Pancreas (tissue), 10 donors: ENCODE measurements at regions of chr16 and their contacts with region 1.

Region 1: GRCh38 chr16:57413301-57413730 is 8.7 kb downstream of the CCL17 start:
- DNase-seq: peak in 1 of 6 donors; percentile 39
- ATAC-seq: no peak
- H3K4me3 ChIP-seq: no peak overlapping the region
- H3K27ac ChIP-seq: no peak overlapping the region
- H3K4me1 ChIP-seq: peaks cover 0 to 6% (median 0%) of the 10 kb centered on the region in 3 donors
- H3K27me3 ChIP-seq: no peaks in the 10 kb centered on the region
- CTCF ChIP-seq: no peak

Region 2: DNA sequence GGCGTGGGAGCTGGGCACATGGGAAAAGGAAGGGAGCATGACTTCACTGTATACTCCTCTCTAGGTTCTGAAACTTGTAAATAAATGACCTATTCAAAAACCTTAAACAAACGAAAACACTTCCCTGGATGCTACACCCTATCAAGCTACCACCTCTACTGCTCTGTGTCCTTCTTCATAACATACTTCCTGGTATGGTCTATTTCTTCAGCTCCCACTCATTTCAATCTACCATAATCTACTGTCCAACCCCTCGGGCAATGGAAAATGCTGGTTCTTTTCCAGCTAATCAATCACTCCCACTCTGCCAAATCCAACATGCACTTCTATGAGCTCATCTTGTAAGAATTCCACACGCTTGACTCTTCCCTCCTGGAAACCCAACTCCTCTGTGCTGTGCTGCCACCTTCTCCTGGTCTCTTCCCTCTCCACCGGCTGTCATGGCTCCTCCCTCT is 1030.4 kb before region 1 on chr16:
- intact Hi-C with region 1: no loop called
- DNase-seq: no peak
- ATAC-seq: peak; percentile 48 to 78 (median 76)
- H3K4me3 ChIP-seq: no peak overlapping the region
- H3K27ac ChIP-seq: peak overlapping the region in 2 of 4 donors; percentile 6 to 34
- H3K4me1 ChIP-seq: no peaks in the 10 kb centered on the region
- H3K27me3 ChIP-seq: no peaks in the 10 kb centered on the region
- CTCF ChIP-seq: no peak

Region 3: GRCh38 chr16:57071831-57072582 is 341.3 kb before region 1 on chr16:
- intact Hi-C with region 1: loop called in 1 of 3 experiments (anchors 10 kb)
- DNase-seq: no peak
- ATAC-seq: no peak
- H3K4me3 ChIP-seq: no peak overlapping the region
- H3K27ac ChIP-seq: no peak overlapping the region
- H3K4me1 ChIP-seq: no peaks in the 10 kb centered on the region
- H3K27me3 ChIP-seq: no peaks in the 10 kb centered on the region
- CTCF ChIP-seq: no peak

Region 4: GRCh38 chr16:57519796-57520360 is 106.6 kb after region 1 on chr16:
- intact Hi-C with region 1: loop called in 1 of 3 experiments (anchors 2 kb)
- DNase-seq: peak; percentile 57 to 93 (median 80)
- ATAC-seq: peak; percentile 85 to 95 (median 91)
- H3K4me3 ChIP-seq: no peak overlapping the region
- H3K27ac ChIP-seq: no peak overlapping the region
- H3K4me1 ChIP-seq: no peaks in the 10 kb centered on the region
- H3K27me3 ChIP-seq: no peaks in the 10 kb centered on the region
- CTCF ChIP-seq: peak; percentile 94 to 98 (median 96)

Region 5: GRCh38 chr16:57591086-57591869 is 178.0 kb after region 1 on chr16:
- intact Hi-C with region 1: no loop called
- DNase-seq: peak; percentile 59 to 84 (median 78)
- ATAC-seq: peak; percentile 95 to 98 (median 96)
- H3K4me3 ChIP-seq: no peak overlapping the region
- H3K27ac ChIP-seq: no peak overlapping the region
- H3K4me1 ChIP-seq: no peaks in the 10 kb centered on the region
- H3K27me3 ChIP-seq: no peaks in the 10 kb centered on the region
- CTCF ChIP-seq: peak; percentile 71 to 92 (median 83)